Cardiac septum (tissue), 1 donor: ENCODE measurements at regions of chr2 and their contacts with region 1.

Region 1: GRCh38 chr2:1817256-1818051 is 73.1 kb upstream of the PXDN start:
- DNase-seq: peak; percentile 92

Region 2: DNA sequence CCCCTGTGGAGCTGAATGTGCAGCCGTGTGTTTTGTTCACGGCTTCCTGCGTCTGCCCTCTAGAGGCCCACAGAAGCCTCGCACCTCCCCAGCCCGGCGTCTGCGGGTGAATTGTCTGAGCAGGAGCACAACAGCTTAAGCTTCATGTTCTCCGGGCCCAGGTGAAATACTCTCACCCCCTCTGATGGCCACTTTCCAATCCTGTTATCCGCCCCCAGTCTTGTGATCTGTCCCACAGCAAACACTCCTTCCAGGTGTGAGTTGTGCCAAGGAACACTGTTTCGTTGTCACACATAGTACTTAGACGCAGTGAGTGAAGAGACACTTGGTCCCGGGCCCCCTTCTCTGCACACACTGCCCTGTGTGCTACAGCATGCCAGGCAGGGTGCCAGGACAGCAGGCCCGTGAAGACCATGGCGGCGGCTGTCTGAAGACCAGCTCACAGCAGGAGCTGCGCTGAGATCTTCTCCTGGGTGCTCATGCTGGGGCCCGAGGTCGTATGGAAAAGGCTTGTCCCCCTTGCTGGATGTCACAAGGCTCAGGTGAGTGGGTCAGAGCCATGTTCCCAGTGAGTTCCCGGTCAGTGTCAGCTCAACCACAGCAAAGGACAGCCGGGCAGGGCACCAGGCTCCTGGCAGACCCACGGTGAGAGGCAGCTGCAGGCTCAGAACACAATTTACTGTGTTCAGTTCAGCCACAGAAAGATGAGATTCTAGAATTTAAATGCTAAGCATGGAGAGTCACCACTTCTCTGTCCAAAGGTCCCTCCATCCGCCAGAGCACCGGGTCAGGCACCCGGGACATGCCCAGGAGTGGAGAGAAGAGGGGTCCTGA is 66.3 kb before region 1 on chr2:
- intact Hi-C with region 1: loop called (anchors 5 kb)
- DNase-seq: peak; percentile 76